ENCODE measurements at regions of chr14 and their contacts with region 1.

Region 1: GRCh38 chr14:22986508-22987054 is 4.2 kb upstream of the AJUBA start:
- DNase-seq: no peak
- H3K4me3 ChIP-seq: no peak overlapping the region
- H3K27me3 ChIP-seq: no peaks in the 10 kb centered on the region
- CTCF ChIP-seq: peak; percentile 88

Region 2: GRCh38 chr14:22438742-22439141 is 547.8 kb before region 1 on chr14:
- CTCF ChIA-PET with region 1: no interaction called
- POLR2A ChIA-PET with region 1: no interaction called
- DNase-seq: no peak
- H3K4me3 ChIP-seq: no peak overlapping the region
- H3K27me3 ChIP-seq: peaks cover 6% of the 10 kb centered on the region
- CTCF ChIP-seq: no peak

Region 3: DNA sequence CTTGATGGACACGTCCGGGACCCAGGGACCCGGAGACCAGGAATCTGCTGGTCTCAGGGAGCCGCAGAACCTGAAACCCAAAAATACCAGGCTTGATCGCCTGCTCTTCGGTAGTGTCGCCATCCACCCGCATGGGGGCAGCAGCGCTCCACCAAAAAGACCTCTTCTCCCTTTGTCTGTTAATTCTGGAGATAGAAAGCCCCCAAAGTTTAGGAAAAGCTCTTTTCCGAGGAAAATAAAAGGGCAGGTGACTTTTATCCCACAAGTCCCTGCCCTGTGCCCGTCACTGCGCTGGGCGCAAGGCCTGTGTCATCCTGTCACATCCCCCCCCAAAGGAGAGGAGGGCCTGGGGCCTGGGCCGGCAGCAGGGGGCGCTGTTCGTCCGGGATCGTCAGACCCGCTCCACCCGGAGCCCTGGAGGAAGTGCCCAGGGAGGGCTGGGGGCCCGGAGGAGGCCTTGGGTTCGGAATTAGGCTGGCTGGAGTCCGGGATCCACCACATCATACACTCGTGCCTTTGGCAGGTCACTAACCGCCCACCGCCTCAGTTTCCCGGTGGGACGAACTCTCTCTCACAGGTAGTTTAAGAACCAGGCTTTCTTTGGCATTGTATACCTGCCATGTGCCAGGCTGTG is 429.5 kb before region 1 on chr14:
- CTCF ChIA-PET with region 1: interaction called, 17 read pairs
- POLR2A ChIA-PET with region 1: no interaction called
- DNase-seq: no peak
- H3K4me3 ChIP-seq: peak overlapping the region; percentile 22
- H3K27me3 ChIP-seq: no peaks in the 10 kb centered on the region
- CTCF ChIP-seq: peak; percentile 96

Region 4: DNA sequence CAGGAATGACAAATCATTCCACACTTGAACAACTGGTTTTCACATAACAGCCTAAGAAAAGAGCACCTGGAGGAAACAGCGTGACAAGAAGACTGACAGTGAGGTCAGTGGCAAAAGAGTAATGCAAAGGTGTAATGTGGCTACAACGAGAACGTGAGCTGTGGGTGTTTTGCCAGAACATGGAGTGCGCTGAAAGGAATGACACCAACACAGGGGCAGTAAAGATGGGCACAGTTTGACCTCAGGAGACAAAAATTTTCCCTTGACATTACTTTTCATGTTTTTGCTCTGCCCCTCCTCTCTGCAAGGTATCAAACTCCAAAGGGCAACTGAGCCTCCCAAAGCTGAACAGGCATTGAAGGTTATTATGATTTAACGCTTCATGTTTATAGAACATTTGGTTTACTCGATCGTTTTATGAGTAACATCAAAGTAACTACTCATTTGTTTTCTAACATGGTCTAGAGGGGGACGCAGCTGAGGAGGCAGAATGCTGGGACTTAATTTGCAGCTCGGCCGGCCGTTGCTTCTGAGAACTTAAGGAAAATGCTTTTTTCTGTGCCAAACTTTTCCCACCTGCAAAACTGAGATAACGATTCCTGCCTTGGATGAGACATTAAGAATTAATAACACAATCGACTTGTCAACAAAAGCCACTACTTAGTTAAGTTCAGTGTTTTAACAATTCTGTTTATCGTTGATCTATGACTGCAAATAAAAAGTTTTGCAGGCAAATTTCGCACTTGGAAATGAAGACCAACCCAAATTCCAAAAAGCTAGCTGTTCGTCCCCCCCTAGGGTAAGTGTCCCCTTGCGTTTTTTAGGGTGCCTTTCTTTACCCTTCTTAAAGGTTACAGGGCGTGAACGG is 30.6 kb before region 1 on chr14:
- CTCF ChIA-PET with region 1: interaction called, 13 read pairs
- POLR2A ChIA-PET with region 1: no interaction called
- DNase-seq: no peak
- H3K4me3 ChIP-seq: peak overlapping the region; percentile 53
- H3K27me3 ChIP-seq: no peaks in the 10 kb centered on the region; the same call in 1 of the 2 replicates
- CTCF ChIP-seq: no peak

Region 5: DNA sequence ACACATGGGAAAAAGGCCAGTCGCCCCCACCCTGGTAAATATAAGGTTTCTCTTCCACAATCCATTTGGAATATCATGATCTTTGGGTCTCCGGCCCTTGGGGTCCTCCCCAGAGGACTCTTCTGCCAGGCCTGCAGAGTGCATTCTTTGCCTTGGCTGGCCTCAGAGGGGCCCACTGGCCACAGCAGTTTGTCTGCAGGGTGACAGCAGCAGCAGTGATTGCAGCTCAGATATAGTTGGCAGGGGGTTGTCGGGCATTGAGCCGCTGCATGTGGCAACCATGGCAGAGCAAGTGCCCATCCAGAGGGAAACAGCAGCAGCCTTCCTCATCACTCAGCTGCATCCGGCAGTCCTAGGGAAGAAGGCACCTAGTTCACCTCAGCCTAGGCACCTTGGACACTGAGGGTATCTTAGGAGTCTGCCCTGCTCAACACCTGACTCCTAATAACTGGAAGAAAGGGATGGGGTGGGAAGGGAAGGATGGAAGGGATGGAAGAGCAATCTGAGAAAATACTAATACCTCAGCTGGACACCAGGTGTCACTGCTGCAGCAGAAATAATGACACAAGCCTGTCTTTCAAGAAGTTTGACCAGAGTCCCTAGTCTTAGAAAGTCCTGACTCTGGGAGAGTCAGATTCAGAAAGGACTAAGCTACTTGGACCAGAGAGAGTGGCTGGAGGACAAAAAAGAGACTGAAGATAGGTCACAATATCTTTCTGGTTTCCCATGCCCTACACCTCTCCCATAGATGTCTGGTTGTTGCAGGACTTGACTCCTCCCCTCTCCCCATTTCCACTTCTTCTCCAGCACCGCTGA is 13.2 kb before region 1 on chr14:
- CTCF ChIA-PET with region 1: interaction called, 93 read pairs
- POLR2A ChIA-PET with region 1: interaction called, 3 read pairs
- DNase-seq: no peak
- H3K4me3 ChIP-seq: no peak overlapping the region
- H3K27me3 ChIP-seq: no peaks in the 10 kb centered on the region
- CTCF ChIP-seq: peak; percentile 65

Region 6: GRCh38 chr14:23006544-23007419 is 20.2 kb after region 1 on chr14:
- CTCF ChIA-PET with region 1: interaction called, 59 read pairs
- POLR2A ChIA-PET with region 1: no interaction called
- DNase-seq: peak; percentile 87
- H3K4me3 ChIP-seq: peak overlapping the region; percentile 75
- H3K27me3 ChIP-seq: no peaks in the 10 kb centered on the region
- CTCF ChIP-seq: peak; percentile 51

Region 7: GRCh38 chr14:23068476-23069412 is 82.2 kb after region 1 on chr14:
- CTCF ChIA-PET with region 1: interaction called, 539 read pairs
- POLR2A ChIA-PET with region 1: no interaction called
- DNase-seq: peak; percentile 70
- H3K4me3 ChIP-seq: no peak overlapping the region
- H3K27me3 ChIP-seq: no peaks in the 10 kb centered on the region
- CTCF ChIP-seq: peak; percentile 99

Region 8: GRCh38 chr14:23114669-23115491 is 128.3 kb after region 1 on chr14:
- CTCF ChIA-PET with region 1: interaction called, 39 read pairs
- POLR2A ChIA-PET with region 1: no interaction called
- DNase-seq: peak; percentile 92
- H3K4me3 ChIP-seq: no peak overlapping the region
- H3K27me3 ChIP-seq: peaks cover under 1% of the 10 kb centered on the region; the same call in 1 of the 2 replicates
- CTCF ChIP-seq: no peak

Measured in BJ (cell line).